K562 (cell line): ENCODE measurements at regions of chr20 and their contacts with region 1.

Region 1: GRCh38 chr20:5205348-5206210 is 78.8 kb downstream of the CDS2 start:
- DNase-seq: peak; percentile 66 to 77 (median 72)
- ATAC-seq: peak; percentile 100
- H3K4me3 ChIP-seq: no peak overlapping the region
- H3K27ac ChIP-seq: no peak overlapping the region
- H3K4me1 ChIP-seq: no peaks in the 10 kb centered on the region; a peak in 1 of 5 replicates
- H3K27me3 ChIP-seq: no peaks in the 10 kb centered on the region
- CTCF ChIP-seq: peak; percentile 78 to 85 (median 82)
- EP300 ChIP-seq: no peak
- POLR2A ChIP-seq: no peak
- RAD21 ChIP-seq: peak; percentile 54 to 72

Region 2: GRCh38 chr20:5181956-5182355 is 23.6 kb before region 1 on chr20:
- CTCF ChIA-PET with region 1: no interaction called
- POLR2A ChIA-PET with region 1: no interaction called
- in situ Hi-C with region 1: no loop called
- intact Hi-C with region 1: no loop called
- DNase-seq: no peak
- ATAC-seq: no peak
- H3K4me3 ChIP-seq: no peak overlapping the region
- H3K27ac ChIP-seq: no peak overlapping the region
- H3K4me1 ChIP-seq: no peaks in the 10 kb centered on the region; a peak in 1 of 5 replicates
- H3K27me3 ChIP-seq: no peaks in the 10 kb centered on the region
- CTCF ChIP-seq: no peak
- EP300 ChIP-seq: no peak
- POLR2A ChIP-seq: no peak
- RAD21 ChIP-seq: no peak

Region 3: DNA sequence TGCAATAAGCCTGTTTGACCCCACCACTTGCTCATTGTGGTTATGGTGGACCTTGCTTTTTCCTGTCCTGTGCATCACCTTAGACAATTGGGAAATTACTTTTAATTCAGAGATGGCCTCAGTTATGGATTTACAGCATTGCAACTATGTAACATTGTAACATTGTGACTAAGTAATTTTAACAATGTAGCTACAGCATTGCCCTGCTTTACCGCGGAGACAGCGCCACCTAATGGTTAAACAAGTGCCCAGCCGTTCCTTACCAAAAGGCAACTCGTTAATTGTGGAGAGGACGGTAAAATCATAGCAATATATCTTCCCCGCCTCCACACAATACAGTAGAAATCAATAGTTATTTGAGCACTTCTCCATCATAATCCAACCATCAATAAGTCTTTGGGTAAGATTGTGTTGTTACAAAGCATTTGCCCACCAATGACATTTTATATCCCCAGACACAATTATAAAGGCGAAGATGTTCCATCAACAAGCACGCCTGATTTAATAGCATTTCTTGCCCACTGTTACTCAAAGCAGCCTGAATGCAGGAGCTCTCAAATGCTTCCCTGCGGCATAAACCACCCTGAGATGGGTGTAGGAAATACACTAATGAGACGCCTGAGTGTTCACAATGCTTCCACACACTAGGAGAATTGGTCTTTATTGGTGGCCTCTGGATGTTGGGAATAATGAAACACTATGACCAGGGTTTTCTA is 17.5 kb after region 1 on chr20:
- CTCF ChIA-PET with region 1: interaction called, 3 read pairs
- POLR2A ChIA-PET with region 1: interaction called, 4 read pairs
- in situ Hi-C with region 1: no loop called
- intact Hi-C with region 1: loop called (anchors 1 kb)
- DNase-seq: peak; percentile 47 to 61 (median 53)
- ATAC-seq: peak; percentile 91
- H3K4me3 ChIP-seq: no peak overlapping the region
- H3K27ac ChIP-seq: no peak overlapping the region
- H3K4me1 ChIP-seq: no peaks in the 10 kb centered on the region
- H3K27me3 ChIP-seq: no peaks in the 10 kb centered on the region; a peak in 1 of 5 replicates
- CTCF ChIP-seq: peak; percentile 72 to 88 (median 84)
- EP300 ChIP-seq: no peak
- POLR2A ChIP-seq: no peak
- RAD21 ChIP-seq: peak; percentile 62 to 79

Region 4: GRCh38 chr20:5448449-5449118 is 243.0 kb after region 1 on chr20:
- CTCF ChIA-PET with region 1: interaction called, 15 read pairs
- POLR2A ChIA-PET with region 1: no interaction called
- in situ Hi-C with region 1: no loop called
- intact Hi-C with region 1: loop called (anchors 1 kb)
- DNase-seq: peak; percentile 29 to 56 (median 47)
- ATAC-seq: peak; percentile 72
- H3K4me3 ChIP-seq: no peak overlapping the region
- H3K27ac ChIP-seq: no peak overlapping the region
- H3K4me1 ChIP-seq: no peaks in the 10 kb centered on the region
- H3K27me3 ChIP-seq: no peaks in the 10 kb centered on the region
- CTCF ChIP-seq: peak; percentile 54 to 59 (median 58); a peak in 5 of 6 replicates
- EP300 ChIP-seq: no peak
- POLR2A ChIP-seq: no peak
- RAD21 ChIP-seq: peak; percentile 24 to 60